ENCODE measurements at regions of chr12 and their contacts with region 1.

Region 1: GRCh38 chr12:21683115-21683514 is 25.5 kb upstream of the LDHB start:
- DNase-seq: no peak
- H3K4me3 Mint-ChIP-seq: no peak overlapping the region
- H3K27ac Mint-ChIP-seq: no peak overlapping the region
- H3K4me1 Mint-ChIP-seq: no peaks in the 10 kb centered on the region
- H3K27me3 Mint-ChIP-seq: peaks cover 14% of the 10 kb centered on the region
- CTCF ChIP-seq: no peak

Region 2: GRCh38 chr12:21607701-21608100 is 75.4 kb before region 1 on chr12:
- CTCF ChIA-PET with region 1: interaction called, 51 read pairs
- POLR2A ChIA-PET with region 1: interaction called, 3 read pairs
- intact Hi-C with region 1: loop called (anchors 1 kb)
- DNase-seq: peak; percentile 26
- H3K4me3 Mint-ChIP-seq: no peak overlapping the region
- H3K27ac Mint-ChIP-seq: no peak overlapping the region
- H3K4me1 Mint-ChIP-seq: no peaks in the 10 kb centered on the region
- H3K27me3 Mint-ChIP-seq: no peaks in the 10 kb centered on the region
- CTCF ChIP-seq: peak; percentile 10

Region 3: GRCh38 chr12:21731144-21731543 is 48.0 kb after region 1 on chr12:
- CTCF ChIA-PET with region 1: no interaction called
- POLR2A ChIA-PET with region 1: no interaction called
- intact Hi-C with region 1: no loop called
- DNase-seq: no peak
- H3K4me3 Mint-ChIP-seq: no peak overlapping the region
- H3K27ac Mint-ChIP-seq: no peak overlapping the region
- H3K4me1 Mint-ChIP-seq: no peaks in the 10 kb centered on the region
- H3K27me3 Mint-ChIP-seq: peaks cover 11% of the 10 kb centered on the region
- CTCF ChIP-seq: no peak